ENCODE measurements at regions of chr6 and their contacts with region 1.

Region 1: GRCh38 chr6:31665501-31666336 is at the start of gene CSNK2B:
- DNase-seq: peak; percentile 98
- H3K4me3 Mint-ChIP-seq: peak within 1 kb of the TSS; percentile 96
- H3K27ac Mint-ChIP-seq: peak within 1 kb of the TSS; percentile 94
- H3K4me1 Mint-ChIP-seq: peaks cover 43% of the 10 kb centered on the region
- H3K27me3 Mint-ChIP-seq: no peaks in the 10 kb centered on the region
- total RNA-seq, gene CSNK2B: 266 and 279 TPM in 2 replicates

Region 2: DNA sequence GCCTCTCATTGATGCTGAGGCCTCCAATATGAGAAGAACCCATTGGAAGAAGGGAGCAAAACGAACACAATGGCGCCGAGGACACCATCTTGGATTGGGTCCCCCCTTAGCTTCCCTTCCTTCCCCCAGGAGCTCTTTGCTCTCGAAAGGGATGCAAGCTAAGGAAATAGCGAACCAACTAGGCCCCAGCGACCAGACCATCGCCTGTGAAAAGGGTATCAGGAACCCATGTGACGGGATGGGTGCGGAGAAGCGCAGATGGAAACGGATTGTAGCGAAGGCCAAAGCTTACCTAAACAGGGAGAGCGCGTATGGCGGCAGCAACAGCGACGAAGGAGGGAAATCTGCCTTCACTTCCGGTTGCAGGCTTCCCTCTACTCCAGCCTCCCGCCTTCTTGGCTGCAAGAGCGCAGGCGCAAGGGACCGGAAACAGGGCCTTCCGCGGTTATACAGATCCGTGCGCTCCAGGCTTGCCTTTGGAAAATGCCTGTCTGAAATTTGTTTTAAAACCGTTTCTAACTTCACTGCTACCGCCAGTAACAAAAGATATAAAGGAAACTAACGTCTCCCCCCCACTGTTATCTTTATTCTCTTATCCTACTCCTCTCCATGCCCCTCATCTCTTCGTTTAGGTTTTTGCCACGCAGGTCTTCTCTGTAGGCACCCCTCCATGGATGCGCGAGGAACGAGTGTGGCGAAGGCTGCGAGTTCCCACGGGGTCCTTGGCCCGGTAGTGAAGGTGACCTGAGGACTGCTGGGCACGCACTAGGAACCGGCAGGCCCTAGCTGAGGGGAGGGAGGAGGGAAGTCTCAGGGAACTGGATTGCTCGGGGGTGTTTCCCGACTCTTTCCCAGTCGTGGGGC is 123.8 kb before region 1 on chr6 and contains the start of gene DDX39B:
- intact Hi-C with region 1: loop called (anchors 1 kb)
- DNase-seq: peak; percentile 94
- H3K4me3 Mint-ChIP-seq: peak within 1 kb of the TSS; percentile 98
- H3K27ac Mint-ChIP-seq: peak within 1 kb of the TSS; percentile 95
- H3K4me1 Mint-ChIP-seq: peaks cover 42% of the 10 kb centered on the region
- H3K27me3 Mint-ChIP-seq: no peaks in the 10 kb centered on the region
- total RNA-seq, gene DDX39B: 579 and 583 TPM in 2 replicates

Region 3: DNA sequence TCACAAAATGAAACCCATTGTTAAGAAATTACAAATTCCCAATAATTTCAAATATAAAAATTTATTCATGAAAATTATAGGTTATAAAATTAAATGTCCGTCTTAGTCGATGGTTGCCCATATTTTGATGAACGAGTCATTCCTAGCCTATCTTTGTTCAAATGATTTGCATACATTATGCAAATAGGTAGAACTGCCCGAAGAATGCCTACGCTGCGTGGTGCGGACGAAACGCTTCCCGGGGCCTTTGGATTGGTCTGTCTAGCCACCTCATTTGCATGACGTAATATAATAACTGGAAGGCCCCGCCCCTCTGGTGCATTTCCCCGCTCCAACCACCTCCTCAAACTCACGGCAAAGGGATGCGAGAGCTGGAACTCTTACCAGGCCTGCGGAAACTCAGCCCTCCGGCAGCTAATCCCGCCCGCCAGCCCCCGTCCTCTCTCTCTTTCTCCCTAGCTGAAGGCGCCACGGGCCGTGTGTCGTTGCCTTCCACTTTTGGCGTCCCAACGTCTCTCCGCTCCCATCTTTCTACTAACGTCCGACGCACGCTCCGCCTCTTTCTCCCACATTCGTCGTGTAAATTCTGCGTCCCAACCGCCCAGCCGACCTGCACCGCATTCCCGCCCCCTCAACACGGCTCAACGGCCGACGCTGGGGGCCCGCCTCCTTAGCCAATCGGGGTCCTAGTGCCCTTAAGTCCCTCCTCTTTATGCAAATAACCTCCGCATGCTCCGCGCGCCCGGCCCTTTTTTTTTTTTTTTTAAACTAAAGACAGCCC is 45.7 kb before region 1 on chr6:
- intact Hi-C with region 1: loop called (anchors 1 kb)
- DNase-seq: peak; percentile 98
- H3K4me3 Mint-ChIP-seq: peak overlapping the region; percentile 81
- H3K27ac Mint-ChIP-seq: peak overlapping the region; percentile 94
- H3K4me1 Mint-ChIP-seq: peaks cover 39% of the 10 kb centered on the region
- H3K27me3 Mint-ChIP-seq: no peaks in the 10 kb centered on the region

Region 4: GRCh38 chr6:31631681-31632278 is 33.9 kb before region 1 on chr6:
- intact Hi-C with region 1: no loop called
- DNase-seq: no peak
- H3K4me3 Mint-ChIP-seq: no peak overlapping the region
- H3K27ac Mint-ChIP-seq: no peak overlapping the region
- H3K4me1 Mint-ChIP-seq: peaks cover 4% of the 10 kb centered on the region
- H3K27me3 Mint-ChIP-seq: no peaks in the 10 kb centered on the region

Region 5: GRCh38 chr6:31702819-31703522 is 37.3 kb after region 1 on chr6 and contains the start of gene ABHD16A:
- intact Hi-C with region 1: loop called (anchors 2 kb)
- DNase-seq: peak; percentile 96
- H3K4me3 Mint-ChIP-seq: peak within 1 kb of the TSS; percentile 99
- H3K27ac Mint-ChIP-seq: peak within 1 kb of the TSS; percentile 98
- H3K4me1 Mint-ChIP-seq: peaks cover 21% of the 10 kb centered on the region
- H3K27me3 Mint-ChIP-seq: no peaks in the 10 kb centered on the region
- total RNA-seq, gene ABHD16A: 51.4 and 52.7 TPM in 2 replicates

Region 6: DNA sequence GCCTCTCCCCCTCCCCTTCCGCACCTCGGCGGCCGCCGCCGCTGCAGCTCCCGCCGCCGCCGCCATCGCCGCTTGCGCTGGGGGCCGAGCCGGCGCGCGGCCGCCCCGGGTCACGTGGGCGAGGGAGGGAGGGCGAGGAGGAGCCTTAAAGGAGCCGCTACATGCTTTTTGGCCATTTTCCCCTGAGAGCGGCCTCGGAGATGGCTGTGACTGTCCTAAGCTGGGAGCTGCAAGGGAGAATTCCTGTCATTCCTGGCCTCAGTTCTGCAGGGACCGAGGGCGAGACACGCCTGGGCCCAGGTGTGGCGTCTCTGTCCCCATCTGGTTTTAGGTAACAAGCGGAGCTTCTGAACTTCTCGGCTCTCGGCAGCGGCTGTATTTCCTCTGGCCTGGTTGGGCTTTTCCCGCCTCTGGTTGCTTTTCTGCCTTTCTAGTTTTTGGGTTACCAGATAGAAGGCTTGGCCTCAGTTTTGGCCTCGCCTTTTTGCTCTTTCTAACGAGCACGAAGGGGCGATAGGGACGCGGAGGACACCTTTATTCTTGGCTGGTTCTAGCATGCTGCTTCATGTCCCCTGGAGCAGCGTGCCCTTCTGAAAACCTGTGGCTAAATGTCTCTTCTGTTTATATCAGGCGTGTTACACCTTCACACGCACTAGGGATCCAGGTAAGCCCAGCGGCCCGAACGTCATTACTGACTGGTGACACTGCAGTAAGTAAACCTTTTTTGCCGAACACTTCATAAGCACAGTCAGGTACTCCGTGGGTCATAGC is 232.1 kb after region 1 on chr6 and contains the start of gene EHMT2:
- intact Hi-C with region 1: loop called (anchors 5 kb)
- DNase-seq: peak; percentile 84
- H3K4me3 Mint-ChIP-seq: peak within 1 kb of the TSS; percentile 98
- H3K27ac Mint-ChIP-seq: peak within 1 kb of the TSS; percentile 92
- H3K4me1 Mint-ChIP-seq: peaks cover 31% of the 10 kb centered on the region
- H3K27me3 Mint-ChIP-seq: no peaks in the 10 kb centered on the region
- total RNA-seq, gene EHMT2: 76.3 and 76.5 TPM in 2 replicates

Region 7: GRCh38 chr6:33417903-33418689 is 1752.4 kb after region 1 on chr6 and contains the start of gene CUTA:
- intact Hi-C with region 1: loop called (anchors 5 kb)
- DNase-seq: peak; percentile 99
- H3K4me3 Mint-ChIP-seq: peak within 1 kb of the TSS; percentile 96
- H3K27ac Mint-ChIP-seq: peak within 1 kb of the TSS; percentile 100
- H3K4me1 Mint-ChIP-seq: peaks cover 57% of the 10 kb centered on the region
- H3K27me3 Mint-ChIP-seq: no peaks in the 10 kb centered on the region
- total RNA-seq, gene CUTA: 143 and 146 TPM in 2 replicates